MCF 10A (cell line): ENCODE measurements at regions of chr12 and their contacts with region 1.

Region 1: GRCh38 chr12:52319097-52319496 is 2.1 kb downstream of the KRT83 start:
- DNase-seq: peak; percentile 20
- H3K4me3 Mint-ChIP-seq: no peak overlapping the region
- H3K27ac Mint-ChIP-seq: no peak overlapping the region
- H3K4me1 Mint-ChIP-seq: no peaks in the 10 kb centered on the region
- H3K27me3 Mint-ChIP-seq: no peaks in the 10 kb centered on the region
- CTCF ChIP-seq: peak; percentile 23

Region 2: GRCh38 chr12:52235822-52236692 is 83.0 kb before region 1 on chr12:
- CTCF ChIA-PET with region 1: interaction called, 3 read pairs
- POLR2A ChIA-PET with region 1: no interaction called
- intact Hi-C with region 1: loop called (anchors 1 kb)
- DNase-seq: peak; percentile 38
- H3K4me3 Mint-ChIP-seq: peak overlapping the region; percentile 91
- H3K27ac Mint-ChIP-seq: peak overlapping the region; percentile 91
- H3K4me1 Mint-ChIP-seq: peaks cover 68% of the 10 kb centered on the region
- H3K27me3 Mint-ChIP-seq: no peaks in the 10 kb centered on the region
- CTCF ChIP-seq: no peak

Region 3: DNA sequence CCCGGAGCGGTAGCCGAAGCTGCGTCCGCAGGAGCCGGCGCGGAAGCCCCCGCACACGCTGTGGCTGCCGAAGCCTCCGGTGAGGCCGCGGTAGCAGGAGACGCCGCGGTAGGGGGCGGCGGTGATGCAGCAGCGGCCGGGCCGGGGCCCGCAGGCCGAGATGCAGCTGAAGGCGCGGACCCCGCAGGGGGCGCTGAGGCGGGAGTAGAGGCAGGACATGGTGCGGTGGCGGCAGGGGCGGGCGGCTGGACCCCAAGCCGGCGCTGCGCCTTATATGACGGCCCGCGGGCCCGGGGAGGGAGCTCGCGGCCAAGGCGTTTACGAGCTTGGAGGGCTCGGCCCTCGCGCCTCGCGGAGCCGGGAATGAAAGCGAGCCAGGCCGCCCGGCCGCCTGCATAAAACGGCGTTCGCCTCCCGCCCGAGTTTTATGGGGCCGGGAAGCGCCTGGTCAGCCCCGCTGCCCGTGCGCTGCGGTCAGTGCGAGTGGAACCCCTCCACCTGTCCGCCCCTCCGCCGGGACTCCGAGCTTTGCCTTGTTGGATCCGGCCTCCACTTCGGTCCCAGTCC is 60.7 kb before region 1 on chr12:
- CTCF ChIA-PET with region 1: interaction called, 4 read pairs
- POLR2A ChIA-PET with region 1: no interaction called
- intact Hi-C with region 1: loop called (anchors 2 kb)
- DNase-seq: no peak
- H3K4me3 Mint-ChIP-seq: no peak overlapping the region
- H3K27ac Mint-ChIP-seq: no peak overlapping the region
- H3K4me1 Mint-ChIP-seq: peaks cover 29% of the 10 kb centered on the region
- H3K27me3 Mint-ChIP-seq: no peaks in the 10 kb centered on the region
- CTCF ChIP-seq: no peak